Heart left ventricle (tissue), 16 donors: ENCODE measurements at regions of chr16 and their contacts with region 1.

Region 1: DNA sequence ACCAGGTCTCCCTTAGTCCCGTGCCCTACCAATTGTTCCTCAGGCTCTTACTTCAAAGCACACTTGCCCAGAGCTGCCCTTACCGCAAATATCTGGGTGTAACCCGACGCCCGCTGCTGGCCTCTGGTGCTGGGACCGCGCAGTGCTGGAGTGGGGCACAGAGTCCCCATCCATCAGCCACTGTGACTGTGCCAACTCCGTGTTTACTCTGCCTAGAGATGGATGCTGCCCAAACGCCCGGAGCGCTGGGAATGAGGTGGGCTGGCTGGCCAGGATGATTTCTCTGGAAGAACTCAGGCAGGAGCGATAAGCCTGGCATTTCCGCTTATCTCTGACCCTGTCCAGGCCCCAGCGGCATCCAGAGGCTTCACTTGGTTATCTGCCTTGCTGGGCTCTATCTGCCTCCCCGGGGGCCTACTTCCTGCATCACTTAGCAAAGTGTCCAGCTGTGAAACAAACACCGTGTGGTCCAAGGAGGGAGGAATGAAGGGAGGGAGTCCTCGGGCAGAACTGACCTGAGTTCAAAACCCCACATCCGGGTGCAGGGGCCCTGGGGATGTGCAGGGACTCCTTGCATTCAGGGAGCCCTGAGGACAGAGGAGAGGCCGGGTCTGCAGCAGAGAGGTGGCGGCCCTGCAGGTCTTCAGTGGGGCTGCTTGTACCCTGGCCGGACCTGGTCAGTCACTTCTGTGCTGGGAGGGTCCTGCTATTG is 9.4 kb upstream of the MYLK3 start:
- DNase-seq: peak; percentile 84 to 94 (median 88)
- ATAC-seq: peak; percentile 84 to 91 (median 89)
- H3K4me3 ChIP-seq: peak overlapping the region in 8 of 12 donors; percentile 24 to 48 (median 36)
- H3K27ac ChIP-seq: peak overlapping the region; percentile 62 to 97 (median 86)
- H3K4me1 ChIP-seq: peaks cover 0 to 50% (median 5%) of the 10 kb centered on the region in 12 donors
- H3K27me3 ChIP-seq: peaks cover 0 to 9% (median 0%) of the 10 kb centered on the region in 9 donors
- CTCF ChIP-seq: peak in 7 of 12 donors; percentile 15 to 49 (median 25)
- POLR2A ChIP-seq: no peak

Region 2: GRCh38 chr16:46711106-46712058 is 46.1 kb before region 1 on chr16:
- intact Hi-C with region 1: loop called in 3 of 10 experiments (anchors 2 to 5 kb)
- DNase-seq: peak; percentile 69 to 84 (median 77)
- ATAC-seq: peak; percentile 71 to 84 (median 78)
- H3K4me3 ChIP-seq: no peak overlapping the region
- H3K27ac ChIP-seq: peak overlapping the region; percentile 9 to 84 (median 68)
- H3K4me1 ChIP-seq: peaks cover 5 to 62% (median 28%) of the 10 kb centered on the region in 12 donors
- H3K27me3 ChIP-seq: no peaks in the 10 kb centered on the region
- CTCF ChIP-seq: no peak
- POLR2A ChIP-seq: no peak